Activated T-helper 1 cell treated with anti-CD3 and anti-CD28 coated beads, Interleukin-12 subunit alpha, Interleukin-12 subunit beta, Interleukin-2, Interleukin-4 antibody, amounts not matched to agents 30 ng/mL and 10 ng/mL and 1 ng/mL, durations not matched to agents 14 hours and 24 hours and 36 hours (primary cell): ENCODE measurements at regions of chr10 and their contacts with region 1.

Region 1: GRCh38 chr10:283916-284356 is 148.7 kb downstream of the ZMYND11 start:
- DNase-seq: peak; percentile 16
- H3K4me3 Mint-ChIP-seq: peak overlapping the region; percentile 41
- H3K27ac Mint-ChIP-seq: peak overlapping the region; percentile 78
- H3K4me1 Mint-ChIP-seq: peaks cover 29% of the 10 kb centered on the region
- H3K27me3 Mint-ChIP-seq: no peaks in the 10 kb centered on the region

Region 2: GRCh38 chr10:317271-317769 is 33.4 kb after region 1 on chr10:
- intact Hi-C with region 1: no loop called
- DNase-seq: no peak
- H3K4me3 Mint-ChIP-seq: no peak overlapping the region
- H3K27ac Mint-ChIP-seq: no peak overlapping the region
- H3K4me1 Mint-ChIP-seq: no peaks in the 10 kb centered on the region
- H3K27me3 Mint-ChIP-seq: no peaks in the 10 kb centered on the region

Region 3: GRCh38 chr10:329361-330099 is 45.6 kb after region 1 on chr10:
- intact Hi-C with region 1: loop called (anchors 1 kb)
- DNase-seq: no peak
- H3K4me3 Mint-ChIP-seq: no peak overlapping the region
- H3K27ac Mint-ChIP-seq: peak overlapping the region; percentile 11
- H3K4me1 Mint-ChIP-seq: peaks cover 24% of the 10 kb centered on the region
- H3K27me3 Mint-ChIP-seq: no peaks in the 10 kb centered on the region

Region 4: DNA sequence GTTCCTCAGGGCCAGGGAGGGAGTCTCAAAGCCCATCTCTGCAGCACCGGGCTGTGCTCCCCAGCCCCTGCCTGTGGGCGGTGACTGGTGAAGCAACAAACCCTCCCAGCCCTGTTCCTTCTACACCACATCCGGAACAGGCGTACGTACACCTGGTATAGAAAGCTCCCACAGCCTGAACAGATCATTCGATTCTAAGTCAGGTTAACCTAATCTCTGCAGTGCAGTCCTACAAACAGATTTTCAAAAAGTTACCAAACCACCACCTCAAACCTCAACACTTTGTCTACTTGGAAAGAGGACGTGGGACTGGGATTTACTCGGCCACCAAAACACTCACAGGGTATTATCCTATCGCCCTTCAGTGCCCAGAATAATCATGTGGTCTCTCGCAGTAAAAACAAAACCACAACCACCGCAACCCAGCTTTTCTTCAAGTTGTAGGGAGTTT is 167.1 kb after region 1 on chr10:
- intact Hi-C with region 1: loop called (anchors 1 kb)
- DNase-seq: peak; percentile 51
- H3K4me3 Mint-ChIP-seq: peak overlapping the region; percentile 65
- H3K27ac Mint-ChIP-seq: peak overlapping the region; percentile 26
- H3K4me1 Mint-ChIP-seq: peaks cover 22% of the 10 kb centered on the region
- H3K27me3 Mint-ChIP-seq: peaks cover 13% of the 10 kb centered on the region